ENCODE measurements at regions of chr1 and their contacts with region 1.

Region 1: DNA sequence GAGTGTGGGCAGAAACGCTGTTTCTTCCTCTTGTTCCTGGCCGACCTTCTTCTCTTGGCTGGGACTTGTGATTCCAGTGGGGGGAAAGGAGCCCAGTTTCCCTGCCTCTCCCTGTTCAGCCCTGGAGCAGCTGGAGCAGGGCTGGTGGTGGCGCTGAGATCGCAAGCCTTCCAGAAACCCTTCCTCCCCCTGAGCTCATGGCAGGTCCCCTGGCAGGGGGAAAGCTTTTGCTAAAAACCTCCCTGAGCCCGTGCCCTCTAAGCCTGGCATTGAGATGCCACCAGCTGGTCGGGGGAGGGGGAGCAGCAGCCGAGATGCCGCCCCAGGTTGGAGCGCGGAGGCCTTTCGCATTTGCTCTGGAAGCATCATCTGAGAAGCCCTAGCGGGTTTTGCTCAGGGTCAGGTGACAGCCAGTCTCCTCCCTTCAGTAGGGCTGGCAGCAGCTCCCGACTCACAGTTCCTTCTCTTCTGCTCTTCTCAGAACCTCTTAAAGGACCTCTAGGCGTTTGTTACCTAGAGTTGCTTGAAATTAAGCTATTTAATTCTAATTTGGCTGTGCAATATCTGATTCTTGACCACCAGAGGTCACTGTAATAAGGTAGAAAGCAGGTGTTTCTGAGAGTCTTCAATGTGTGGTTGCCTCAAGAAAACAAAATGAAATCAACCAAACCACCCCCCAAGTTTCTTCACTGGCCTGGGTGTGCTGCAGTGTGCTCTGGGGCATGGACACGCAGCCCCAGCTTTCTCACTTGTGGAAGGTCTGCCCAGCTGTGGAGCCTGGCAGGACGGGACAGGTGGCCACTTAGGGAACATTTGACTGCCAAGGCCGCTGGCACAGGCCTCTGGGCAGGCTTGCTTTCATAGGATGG is 257.3 kb downstream of the CAMTA1 start:
- DNase-seq: peak in 1 of 2 experiments; percentile 18
- H3K4me3 ChIP-seq: no peak overlapping the region
- H3K4me3 Mint-ChIP-seq: no peak overlapping the region
- H3K27ac Mint-ChIP-seq: no peak overlapping the region
- H3K4me1 ChIP-seq: no peaks in the 10 kb centered on the region
- H3K4me1 Mint-ChIP-seq: no peaks in the 10 kb centered on the region
- H3K27me3 ChIP-seq: no peaks in the 10 kb centered on the region
- H3K27me3 Mint-ChIP-seq: peaks cover 14% of the 10 kb centered on the region
- CTCF ChIP-seq: peak; percentile 46 to 50

Region 2: DNA sequence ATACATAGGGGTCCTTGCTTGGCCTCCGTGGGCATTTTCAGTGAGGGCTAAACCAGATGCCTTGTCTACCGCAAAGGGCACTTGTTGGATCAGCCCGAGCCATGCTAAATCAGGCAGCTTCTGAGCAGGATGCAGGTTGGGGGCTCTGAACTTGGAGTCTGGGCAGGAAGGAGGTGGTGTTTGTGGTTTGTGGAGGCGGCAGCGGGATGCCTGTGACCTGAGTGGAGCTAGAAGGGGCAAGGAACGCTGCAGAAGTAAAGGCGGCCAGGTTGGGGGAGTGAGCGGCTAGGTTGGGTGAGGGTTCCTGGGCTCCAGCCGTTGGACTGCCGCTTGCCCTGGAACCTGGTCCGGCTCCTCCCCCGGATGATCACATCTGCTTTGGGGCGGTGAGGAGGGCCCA is 73.5 kb before region 1 on chr1:
- CTCF ChIA-PET with region 1: no interaction called
- POLR2A ChIA-PET with region 1: no interaction called
- intact Hi-C with region 1: no loop called
- DNase-seq: no peak
- H3K4me3 ChIP-seq: no peak overlapping the region
- H3K4me3 Mint-ChIP-seq: no peak overlapping the region
- H3K27ac Mint-ChIP-seq: no peak overlapping the region
- H3K4me1 ChIP-seq: no peaks in the 10 kb centered on the region
- H3K4me1 Mint-ChIP-seq: no peaks in the 10 kb centered on the region
- H3K27me3 ChIP-seq: no peaks in the 10 kb centered on the region
- H3K27me3 Mint-ChIP-seq: peaks cover 26% of the 10 kb centered on the region
- CTCF ChIP-seq: no peak

Region 3: GRCh38 chr1:7013833-7014639 is 28.5 kb before region 1 on chr1:
- CTCF ChIA-PET with region 1: no interaction called
- POLR2A ChIA-PET with region 1: no interaction called
- intact Hi-C with region 1: no loop called
- DNase-seq: no peak
- H3K4me3 ChIP-seq: no peak overlapping the region
- H3K4me3 Mint-ChIP-seq: no peak overlapping the region
- H3K27ac Mint-ChIP-seq: no peak overlapping the region
- H3K4me1 ChIP-seq: no peaks in the 10 kb centered on the region
- H3K4me1 Mint-ChIP-seq: no peaks in the 10 kb centered on the region
- H3K27me3 ChIP-seq: no peaks in the 10 kb centered on the region
- H3K27me3 Mint-ChIP-seq: peaks cover 26% of the 10 kb centered on the region
- CTCF ChIP-seq: no peak

Region 4: DNA sequence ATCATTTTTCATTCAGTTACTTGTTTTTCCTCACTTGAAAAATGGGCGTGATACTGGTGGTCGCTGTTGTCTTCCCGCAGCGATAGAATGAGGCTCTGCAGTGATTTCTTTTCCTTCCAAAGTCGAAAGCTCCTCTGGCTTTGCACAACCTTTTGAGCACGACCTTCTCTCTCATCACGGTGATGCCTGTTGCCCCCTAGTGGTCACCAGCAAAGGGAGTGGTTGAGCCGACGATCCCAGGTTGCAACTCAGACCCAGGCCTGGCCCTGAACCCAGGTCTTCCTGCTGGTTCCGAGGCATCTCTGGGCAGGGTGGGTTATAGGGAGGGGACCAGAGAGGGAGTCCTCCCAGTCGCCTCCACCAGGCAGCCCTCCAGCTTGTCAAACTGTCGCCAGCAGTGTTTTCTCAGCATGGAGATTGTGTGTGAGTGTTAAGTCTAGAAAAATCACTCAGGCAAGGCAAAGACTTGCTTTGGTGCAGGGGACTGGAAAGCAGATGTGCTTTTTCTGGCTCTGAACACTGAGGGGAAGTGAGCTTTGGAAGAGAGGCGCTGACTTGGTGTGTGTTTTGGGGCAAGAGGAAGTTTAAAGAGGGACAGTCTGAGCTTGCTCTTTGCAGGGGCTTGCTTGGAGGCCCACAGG is 28.0 kb after region 1 on chr1:
- CTCF ChIA-PET with region 1: interaction called, 11 read pairs
- POLR2A ChIA-PET with region 1: no interaction called
- intact Hi-C with region 1: no loop called
- DNase-seq: peak; percentile 56 to 58
- H3K4me3 ChIP-seq: no peak overlapping the region
- H3K4me3 Mint-ChIP-seq: no peak overlapping the region
- H3K27ac Mint-ChIP-seq: no peak overlapping the region
- H3K4me1 ChIP-seq: no peaks in the 10 kb centered on the region
- H3K4me1 Mint-ChIP-seq: no peaks in the 10 kb centered on the region
- H3K27me3 ChIP-seq: no peaks in the 10 kb centered on the region
- H3K27me3 Mint-ChIP-seq: peaks cover 10% of the 10 kb centered on the region
- CTCF ChIP-seq: peak; percentile 64 to 83

Region 5: GRCh38 chr1:7218210-7218832 is 175.8 kb after region 1 on chr1:
- CTCF ChIA-PET with region 1: interaction called, 11 read pairs
- POLR2A ChIA-PET with region 1: no interaction called
- intact Hi-C with region 1: no loop called
- DNase-seq: peak in 1 of 2 experiments; percentile 49
- H3K4me3 ChIP-seq: no peak overlapping the region
- H3K4me3 Mint-ChIP-seq: no peak overlapping the region
- H3K27ac Mint-ChIP-seq: no peak overlapping the region
- H3K4me1 ChIP-seq: no peaks in the 10 kb centered on the region
- H3K4me1 Mint-ChIP-seq: no peaks in the 10 kb centered on the region
- H3K27me3 ChIP-seq: no peaks in the 10 kb centered on the region
- H3K27me3 Mint-ChIP-seq: peaks cover 16% of the 10 kb centered on the region
- CTCF ChIP-seq: peak; percentile 79 to 80

Region 6: DNA sequence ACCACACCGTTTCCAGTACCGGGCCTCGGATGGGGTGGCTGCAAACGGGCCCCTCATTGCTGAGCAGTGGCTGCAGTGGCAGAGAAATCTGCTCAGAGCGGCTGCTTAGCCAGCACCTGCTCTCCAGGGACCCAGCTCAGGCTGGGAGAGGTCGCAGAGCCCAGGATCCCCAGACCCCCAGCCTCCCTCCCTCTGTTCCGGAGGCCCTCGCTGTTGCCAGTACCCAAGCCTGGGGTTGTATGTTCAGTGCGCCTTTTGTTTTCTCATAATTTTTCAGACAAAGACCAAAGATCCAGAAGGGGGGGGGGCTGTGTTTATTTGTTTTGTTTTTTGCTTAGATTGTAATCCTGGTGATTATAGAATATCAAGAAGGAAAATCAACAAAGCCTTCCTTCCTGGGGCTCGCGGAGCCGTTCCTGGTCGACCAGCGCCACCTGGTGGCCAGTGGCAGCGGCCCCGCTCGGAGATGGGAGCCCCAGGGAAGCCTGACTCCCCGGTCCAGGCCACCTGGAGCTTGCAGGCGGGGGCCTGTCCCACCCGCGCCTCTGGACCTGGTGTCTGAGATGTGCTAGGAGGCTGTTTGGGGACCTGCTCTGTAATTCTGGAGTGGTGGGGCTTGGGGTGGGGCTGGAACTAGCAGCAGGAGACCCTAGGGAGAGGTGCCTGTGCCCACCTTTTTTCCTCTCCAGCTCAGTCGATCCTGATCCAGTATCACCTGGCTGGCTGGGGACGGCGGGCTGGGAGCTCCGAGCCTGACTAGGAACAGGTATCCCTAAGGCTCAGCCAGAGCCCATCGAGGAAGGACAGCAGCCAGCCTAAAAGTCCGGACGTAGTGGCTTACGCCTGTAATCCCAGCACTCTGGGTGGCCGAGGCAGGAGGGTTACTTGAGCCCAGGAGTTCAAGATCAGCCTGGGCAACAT is 604.7 kb after region 1 on chr1:
- CTCF ChIA-PET with region 1: interaction called, 3 read pairs
- POLR2A ChIA-PET with region 1: no interaction called
- intact Hi-C with region 1: loop called (anchors 2 kb)
- DNase-seq: peak; percentile 56 to 78
- H3K4me3 ChIP-seq: no peak overlapping the region
- H3K4me3 Mint-ChIP-seq: no peak overlapping the region
- H3K27ac Mint-ChIP-seq: no peak overlapping the region
- H3K4me1 ChIP-seq: no peaks in the 10 kb centered on the region
- H3K4me1 Mint-ChIP-seq: no peaks in the 10 kb centered on the region
- H3K27me3 ChIP-seq: no peaks in the 10 kb centered on the region
- H3K27me3 Mint-ChIP-seq: no peaks in the 10 kb centered on the region
- CTCF ChIP-seq: peak; percentile 87 to 93